Esophagus muscularis mucosa (tissue), 4 donors: ENCODE measurements at regions of chr2 and their contacts with region 1.

Region 1: GRCh38 chr2:99819766-99820165 is 322.6 kb downstream of the AFF3 start:
- DNase-seq: no peak
- H3K4me3 ChIP-seq: no peak overlapping the region
- H3K27ac ChIP-seq: no peak overlapping the region
- H3K4me1 ChIP-seq: no peaks in the 10 kb centered on the region
- H3K27me3 ChIP-seq: no peaks in the 10 kb centered on the region
- CTCF ChIP-seq: no peak
- EP300 ChIP-seq: no peak
- POLR2A ChIP-seq: no peak

Region 2: DNA sequence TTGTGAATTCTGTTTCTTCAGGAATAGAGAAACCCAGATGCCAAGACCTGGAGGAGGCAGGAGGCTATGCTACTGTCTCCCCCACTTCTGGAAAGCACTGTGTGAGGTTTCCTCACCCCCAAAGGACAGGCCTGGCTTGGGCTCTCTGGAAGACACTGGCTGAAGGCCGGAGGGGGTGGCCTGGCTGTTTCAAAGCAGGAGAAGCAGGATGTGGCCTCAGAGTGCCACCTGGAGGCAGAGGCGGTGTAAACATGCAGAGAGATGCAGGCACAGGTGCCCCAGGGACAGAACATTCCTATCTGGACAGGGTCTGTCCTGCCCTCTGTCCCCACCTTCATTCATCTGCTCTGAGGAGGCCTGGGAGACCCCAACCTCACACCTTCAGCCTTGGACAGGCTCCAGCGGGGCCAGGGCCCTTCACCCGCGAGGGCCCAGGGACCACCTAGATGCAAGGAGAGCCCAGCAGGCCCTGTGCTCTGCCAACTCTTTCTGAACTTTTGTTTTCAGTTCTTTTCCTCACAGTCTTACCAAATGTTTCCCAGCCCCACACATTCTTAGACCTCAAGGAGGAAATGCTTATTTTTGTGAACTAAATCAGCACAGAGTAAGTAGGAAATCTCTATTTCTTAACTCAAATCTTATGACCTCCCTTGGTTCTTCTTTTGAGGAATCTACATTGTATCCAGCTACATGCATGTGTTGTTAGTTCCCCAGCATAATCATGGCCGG is 423.3 kb after region 1 on chr2:
- intact Hi-C with region 1: loop called (anchors 5 kb)
- DNase-seq: no peak
- H3K4me3 ChIP-seq: no peak overlapping the region
- H3K27ac ChIP-seq: no peak overlapping the region
- H3K4me1 ChIP-seq: peaks cover 6 to 18% (median 7%) of the 10 kb centered on the region in 4 donors
- H3K27me3 ChIP-seq: no peaks in the 10 kb centered on the region
- CTCF ChIP-seq: peak; percentile 76 to 79 (median 76)
- EP300 ChIP-seq: no peak
- POLR2A ChIP-seq: no peak